ENCODE measurements at regions of chr2 and their contacts with region 1.

Region 1: GRCh38 chr2:126657636-126658318 is 1.8 kb downstream of the GYPC start:
- DNase-seq: peak; percentile 61
- ATAC-seq: peak; percentile 80
- H3K4me3 ChIP-seq: peak overlapping the region; percentile 97
- H3K27ac ChIP-seq: peak overlapping the region; percentile 96
- H3K4me1 ChIP-seq: peaks cover 40% of the 10 kb centered on the region
- H3K27me3 ChIP-seq: no peaks in the 10 kb centered on the region
- CTCF ChIP-seq: no peak
- EP300 ChIP-seq: 0 out of 4 replicates have a peak, but pooled peaks of 1 of the 2 experiments have one; percentile 24
- POLR2A ChIP-seq: peak; percentile 81
- RAD21 ChIP-seq: no peak

Region 2: DNA sequence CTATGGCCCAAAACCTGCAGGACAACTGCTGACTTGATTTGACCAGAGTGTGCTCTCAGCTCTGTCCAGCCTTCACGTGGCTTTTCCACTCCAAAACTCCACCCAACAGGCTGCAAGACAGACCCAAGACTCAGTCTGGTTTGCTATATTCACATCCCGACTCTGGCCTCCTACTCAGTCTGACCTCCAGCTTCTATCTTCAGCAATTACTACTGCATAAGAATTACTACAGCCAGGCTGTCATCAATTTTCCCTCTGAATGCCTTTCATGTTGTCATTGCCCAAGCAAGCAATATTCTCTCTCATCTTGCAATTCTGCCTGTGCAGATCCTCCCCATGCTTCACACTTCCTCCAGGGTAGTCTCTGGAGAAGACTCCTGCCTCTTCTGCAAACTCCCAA is 55.4 kb before region 1 on chr2:
- CTCF ChIA-PET with region 1: no interaction called
- POLR2A ChIA-PET with region 1: no interaction called
- RAD21 ChIA-PET with region 1: no interaction called
- SMC1A ChIA-PET with region 1: no interaction called
- in situ Hi-C with region 1: no loop called
- intact Hi-C with region 1: no loop called
- DNase-seq: no peak
- ATAC-seq: no peak
- H3K4me3 ChIP-seq: no peak overlapping the region
- H3K27ac ChIP-seq: no peak overlapping the region
- H3K4me1 ChIP-seq: no peaks in the 10 kb centered on the region
- H3K27me3 ChIP-seq: no peaks in the 10 kb centered on the region
- CTCF ChIP-seq: no peak
- EP300 ChIP-seq: no peak
- POLR2A ChIP-seq: no peak
- RAD21 ChIP-seq: no peak

Region 3: DNA sequence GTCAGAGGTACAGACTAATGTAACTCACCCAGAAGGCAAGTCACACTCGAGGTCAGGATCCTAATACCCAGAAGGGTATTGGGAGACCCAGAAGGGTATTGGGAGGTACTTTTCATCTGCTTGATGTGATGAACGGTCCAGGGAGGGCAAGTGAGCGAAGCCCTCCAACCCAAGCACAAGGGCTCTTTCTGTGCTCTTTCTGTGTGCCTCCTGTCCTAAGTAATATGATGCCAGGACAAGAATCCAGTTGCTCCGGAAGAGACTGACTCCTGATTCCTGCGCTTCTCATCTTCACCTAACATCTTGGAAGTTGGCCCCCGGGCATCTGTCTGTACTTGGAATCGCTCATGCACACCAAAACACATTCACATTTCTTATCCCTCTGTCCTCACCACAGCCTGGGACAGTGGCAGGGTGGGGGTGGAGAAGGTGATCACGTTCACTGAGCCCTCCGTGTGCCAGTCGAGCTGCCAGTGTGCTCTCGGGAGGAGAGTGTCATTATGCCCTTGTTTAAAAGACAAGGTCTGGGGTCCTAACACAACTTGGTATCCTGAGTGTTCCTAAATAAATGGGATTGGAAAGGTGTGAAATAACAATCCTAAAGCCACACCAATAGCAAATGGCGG is 15.3 kb after region 1 on chr2:
- CTCF ChIA-PET with region 1: no interaction called
- POLR2A ChIA-PET with region 1: no interaction called
- RAD21 ChIA-PET with region 1: no interaction called
- SMC1A ChIA-PET with region 1: no interaction called
- in situ Hi-C with region 1: no loop called
- intact Hi-C with region 1: no loop called
- DNase-seq: no peak
- ATAC-seq: no peak
- H3K4me3 ChIP-seq: no peak overlapping the region
- H3K27ac ChIP-seq: no peak overlapping the region
- H3K4me1 ChIP-seq: no peaks in the 10 kb centered on the region
- H3K27me3 ChIP-seq: no peaks in the 10 kb centered on the region
- CTCF ChIP-seq: no peak
- EP300 ChIP-seq: no peak
- POLR2A ChIP-seq: no peak
- RAD21 ChIP-seq: no peak

Region 4: DNA sequence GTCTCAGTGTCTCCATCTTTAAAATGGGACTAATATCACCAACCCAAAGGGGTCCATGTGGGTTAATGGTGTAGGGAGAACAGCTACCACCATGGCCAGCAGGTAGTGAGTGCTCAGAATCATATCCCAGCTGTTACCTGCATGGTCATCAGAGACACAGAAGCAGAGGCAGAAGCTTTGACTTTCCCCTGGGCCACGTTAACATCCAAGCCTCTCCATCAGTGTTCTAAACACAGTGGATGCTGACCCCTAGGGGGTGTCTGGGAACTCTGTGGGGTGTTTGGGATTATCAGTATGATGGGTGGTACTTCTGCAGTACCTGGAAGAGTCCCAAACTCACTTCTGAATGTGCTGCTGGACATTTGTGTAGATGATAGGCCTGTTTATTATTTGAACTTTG is 91.8 kb after region 1 on chr2:
- CTCF ChIA-PET with region 1: no interaction called
- POLR2A ChIA-PET with region 1: no interaction called
- RAD21 ChIA-PET with region 1: no interaction called
- SMC1A ChIA-PET with region 1: no interaction called
- in situ Hi-C with region 1: no loop called
- intact Hi-C with region 1: loop called (anchors 2 kb)
- DNase-seq: no peak
- ATAC-seq: peak; percentile 53
- H3K4me3 ChIP-seq: no peak overlapping the region
- H3K27ac ChIP-seq: no peak overlapping the region
- H3K4me1 ChIP-seq: no peaks in the 10 kb centered on the region; the same call in 1 of the 2 replicates
- H3K27me3 ChIP-seq: no peaks in the 10 kb centered on the region
- CTCF ChIP-seq: peak in 2 of 3 experiments; percentile 40 to 42; a peak in 4 of 6 replicates
- EP300 ChIP-seq: no peak
- POLR2A ChIP-seq: no peak
- RAD21 ChIP-seq: peak; percentile 65

Region 5: DNA sequence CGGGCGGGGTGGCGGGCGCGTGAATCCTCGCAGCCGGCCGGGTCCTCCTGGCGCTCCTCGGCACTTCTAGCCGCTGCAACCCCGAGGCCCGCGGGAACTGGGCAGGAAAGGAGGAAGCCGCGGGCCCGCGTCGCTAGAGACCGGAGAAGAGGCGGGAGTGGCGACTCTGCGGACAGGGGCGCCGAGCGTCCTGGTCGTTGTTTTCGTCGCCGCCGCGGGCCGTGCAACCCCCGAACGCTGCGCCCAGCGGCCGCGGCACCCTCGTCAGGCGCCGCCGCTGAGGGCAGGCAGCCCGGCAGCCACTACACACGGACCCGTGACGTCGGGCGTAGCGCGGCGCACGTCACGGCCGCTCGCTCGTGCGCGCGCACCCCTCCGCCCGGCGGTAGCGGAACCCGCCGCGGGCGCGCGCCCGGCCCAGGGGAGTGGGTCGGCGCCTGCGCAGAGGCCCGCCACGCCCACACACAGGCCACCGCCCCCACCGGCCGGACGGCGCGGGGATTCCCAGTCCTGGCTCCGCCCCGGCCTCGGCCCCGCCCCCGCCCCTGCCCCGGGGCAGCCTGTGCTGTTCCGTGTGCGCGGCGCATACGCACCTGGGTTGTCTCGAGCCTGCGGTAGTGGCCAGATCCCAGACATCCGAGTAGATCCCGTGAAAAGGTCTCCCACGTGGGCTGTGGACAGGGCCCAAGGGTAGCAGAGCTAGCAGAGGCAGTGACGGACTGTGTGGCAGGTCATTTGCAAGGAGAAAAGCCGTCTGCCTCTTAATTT is 730.1 kb after region 1 on chr2 and contains the start of gene MAP3K2:
- CTCF ChIA-PET with region 1: no interaction called
- POLR2A ChIA-PET with region 1: no interaction called
- RAD21 ChIA-PET with region 1: no interaction called
- SMC1A ChIA-PET with region 1: no interaction called
- in situ Hi-C with region 1: loop called (anchors 25 kb)
- intact Hi-C with region 1: no loop called
- DNase-seq: peak; percentile 45
- ATAC-seq: peak; percentile 72
- H3K4me3 ChIP-seq: peak within 1 kb of the TSS; percentile 83
- H3K27ac ChIP-seq: peak within 1 kb of the TSS; percentile 96
- H3K4me1 ChIP-seq: peaks cover 21% of the 10 kb centered on the region
- H3K27me3 ChIP-seq: no peaks in the 10 kb centered on the region
- CTCF ChIP-seq: no peak
- EP300 ChIP-seq: 0 out of 4 replicates have a peak, but pooled peaks of 1 of the 2 experiments have one; percentile 61
- POLR2A ChIP-seq: peak; percentile 97
- RAD21 ChIP-seq: no peak
- polyA plus RNA-seq, gene MAP3K2: 2.7 to 6.4 TPM

Measured in GM12878 (cell line).